ENCODE measurements at regions of chr5 and their contacts with region 1.

Region 1: GRCh38 chr5:923281-923873 is 30.7 kb downstream of the TRIP13 start:
- DNase-seq: peak; percentile 92
- ATAC-seq: peak; percentile 93

Region 2: DNA sequence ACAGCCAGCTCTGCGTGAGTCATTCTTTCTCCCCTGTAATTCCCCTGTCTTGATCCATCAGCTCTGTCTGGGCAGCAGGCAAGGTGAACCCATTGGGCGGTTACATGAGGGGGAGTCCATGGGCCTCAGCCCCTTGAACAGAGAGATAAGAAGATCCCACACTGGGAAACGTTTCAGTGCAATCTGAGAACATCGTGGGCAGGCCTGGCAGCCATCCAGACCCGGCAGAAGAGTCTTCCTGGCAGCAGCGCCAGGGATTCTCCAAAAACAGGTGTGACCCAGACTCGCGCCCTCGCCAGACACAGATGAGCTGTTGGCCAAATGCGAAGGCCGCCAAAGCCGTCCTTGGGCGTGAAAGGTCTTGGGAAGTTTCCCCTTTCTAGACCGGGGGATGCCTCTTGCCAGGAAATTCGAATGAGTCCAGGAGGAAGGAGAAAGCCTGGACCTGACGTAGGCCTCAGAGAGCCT is 194.9 kb after region 1 on chr5:
- intact Hi-C with region 1: no loop called
- DNase-seq: no peak
- ATAC-seq: no peak

Region 3: DNA sequence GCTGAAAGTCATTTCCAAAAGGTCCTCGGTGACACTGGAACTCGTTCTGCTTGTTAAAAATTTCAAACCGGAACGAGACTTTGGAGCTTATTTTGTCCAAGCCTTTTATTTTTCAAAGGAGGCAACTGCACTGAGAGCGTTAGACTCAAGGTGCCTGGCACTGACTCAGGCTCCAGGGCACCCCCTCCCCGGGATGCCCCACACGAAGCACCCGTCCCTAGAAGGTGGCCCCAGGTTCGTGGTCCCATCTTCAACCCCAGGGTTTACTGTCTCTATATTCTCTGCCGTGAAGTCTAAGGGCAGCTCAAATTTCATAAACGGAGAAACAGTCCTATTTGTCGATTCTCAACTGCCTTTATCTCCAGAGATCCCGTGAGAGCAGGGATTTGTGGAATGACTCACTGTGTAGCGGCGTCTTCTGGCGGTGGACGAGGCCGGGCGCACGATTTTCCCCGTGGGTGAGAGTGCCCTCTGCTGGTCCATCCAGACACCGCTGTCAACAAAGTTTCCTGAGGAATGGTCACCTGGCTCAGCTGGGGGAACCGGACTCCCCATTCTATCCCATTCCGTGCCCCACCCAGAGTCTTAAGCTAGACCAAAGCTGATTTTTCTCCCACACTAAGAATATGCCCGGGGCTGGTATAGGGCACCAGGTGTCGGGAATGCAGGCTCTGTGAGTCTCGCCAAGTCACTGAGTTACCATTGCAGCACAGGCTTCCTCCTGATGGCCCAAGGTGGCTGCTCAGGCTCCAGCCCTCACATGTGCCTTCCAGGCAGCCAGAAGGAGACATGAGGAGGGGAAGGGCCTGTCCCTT is 251.0 kb after region 1 on chr5:
- intact Hi-C with region 1: loop called (anchors 5 kb)
- DNase-seq: peak; percentile 78
- ATAC-seq: peak; percentile 84

Measured in Right ventricle myocardium superior (tissue), 1 donor.